Panc1 (cell line): ENCODE measurements at regions of chr1 and their contacts with region 1.

Region 1: DNA sequence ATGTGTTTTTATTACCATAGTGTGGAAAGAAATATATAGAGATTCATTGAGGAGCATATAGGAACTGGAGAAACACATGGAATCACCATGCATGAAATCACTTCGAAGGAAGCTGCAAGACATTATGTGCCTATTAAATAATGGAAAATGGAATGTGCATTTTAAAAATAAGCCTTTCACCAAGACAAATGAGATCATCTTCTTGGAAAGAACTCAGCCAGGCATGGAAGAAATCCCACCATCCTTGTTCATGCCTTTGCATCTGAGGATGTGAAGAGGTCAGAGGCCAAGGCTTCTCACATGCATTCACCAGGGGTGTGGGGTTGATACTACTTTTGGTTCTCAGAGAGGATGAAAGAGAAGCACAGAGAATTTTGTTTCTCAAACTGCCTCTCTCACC is 50.0 kb downstream of the C1orf198 start:
- DNase-seq: no peak
- ATAC-seq: no peak
- H3K4me3 ChIP-seq: no peak overlapping the region
- H3K27ac ChIP-seq: no peak overlapping the region
- H3K4me1 ChIP-seq: no peaks in the 10 kb centered on the region
- H3K27me3 ChIP-seq: no peaks in the 10 kb centered on the region
- CTCF ChIP-seq: no peak

Region 2: GRCh38 chr1:230310381-230311163 is 507.8 kb before region 1 on chr1:
- CTCF ChIA-PET with region 1: no interaction called
- POLR2A ChIA-PET with region 1: no interaction called
- in situ Hi-C with region 1: no loop called
- intact Hi-C with region 1: no loop called
- DNase-seq: peak; percentile 65
- ATAC-seq: peak; percentile 94
- H3K4me3 ChIP-seq: no peak overlapping the region; a peak in 1 of 4 replicates
- H3K27ac ChIP-seq: no peak overlapping the region
- H3K4me1 ChIP-seq: no peaks in the 10 kb centered on the region
- H3K27me3 ChIP-seq: peaks cover 4% of the 10 kb centered on the region
- CTCF ChIP-seq: peak; percentile 91

Region 3: DNA sequence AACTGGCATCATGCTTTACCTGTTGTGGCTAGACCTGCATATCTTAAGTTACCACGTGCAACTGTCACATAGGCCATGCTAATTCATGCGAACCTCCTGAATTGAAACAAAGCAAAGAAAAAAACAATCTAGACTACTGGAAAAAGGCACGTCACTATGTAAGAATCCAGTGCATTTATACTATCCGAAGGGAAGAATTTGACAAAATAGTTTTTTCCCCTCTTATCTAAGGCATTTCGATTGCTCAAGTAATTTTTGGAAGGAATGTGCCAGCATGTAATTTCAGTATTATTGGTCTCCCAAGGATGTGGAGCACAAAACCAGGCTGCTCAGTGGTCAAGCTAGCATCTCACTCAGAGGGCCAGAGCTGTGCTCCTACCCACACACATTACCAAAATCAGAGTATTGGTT is 81.5 kb after region 1 on chr1:
- CTCF ChIA-PET with region 1: no interaction called
- POLR2A ChIA-PET with region 1: no interaction called
- in situ Hi-C with region 1: no loop called
- intact Hi-C with region 1: loop called (anchors 10 kb)
- DNase-seq: no peak
- ATAC-seq: no peak
- H3K4me3 ChIP-seq: no peak overlapping the region
- H3K27ac ChIP-seq: no peak overlapping the region
- H3K4me1 ChIP-seq: no peaks in the 10 kb centered on the region
- H3K27me3 ChIP-seq: 0 out of 2 replicates have a peak, but pooled peaks cover 2% of the 10 kb centered on the region
- CTCF ChIP-seq: no peak